ENCODE measurements at regions of chr17 and their contacts with region 1.

Region 1: DNA sequence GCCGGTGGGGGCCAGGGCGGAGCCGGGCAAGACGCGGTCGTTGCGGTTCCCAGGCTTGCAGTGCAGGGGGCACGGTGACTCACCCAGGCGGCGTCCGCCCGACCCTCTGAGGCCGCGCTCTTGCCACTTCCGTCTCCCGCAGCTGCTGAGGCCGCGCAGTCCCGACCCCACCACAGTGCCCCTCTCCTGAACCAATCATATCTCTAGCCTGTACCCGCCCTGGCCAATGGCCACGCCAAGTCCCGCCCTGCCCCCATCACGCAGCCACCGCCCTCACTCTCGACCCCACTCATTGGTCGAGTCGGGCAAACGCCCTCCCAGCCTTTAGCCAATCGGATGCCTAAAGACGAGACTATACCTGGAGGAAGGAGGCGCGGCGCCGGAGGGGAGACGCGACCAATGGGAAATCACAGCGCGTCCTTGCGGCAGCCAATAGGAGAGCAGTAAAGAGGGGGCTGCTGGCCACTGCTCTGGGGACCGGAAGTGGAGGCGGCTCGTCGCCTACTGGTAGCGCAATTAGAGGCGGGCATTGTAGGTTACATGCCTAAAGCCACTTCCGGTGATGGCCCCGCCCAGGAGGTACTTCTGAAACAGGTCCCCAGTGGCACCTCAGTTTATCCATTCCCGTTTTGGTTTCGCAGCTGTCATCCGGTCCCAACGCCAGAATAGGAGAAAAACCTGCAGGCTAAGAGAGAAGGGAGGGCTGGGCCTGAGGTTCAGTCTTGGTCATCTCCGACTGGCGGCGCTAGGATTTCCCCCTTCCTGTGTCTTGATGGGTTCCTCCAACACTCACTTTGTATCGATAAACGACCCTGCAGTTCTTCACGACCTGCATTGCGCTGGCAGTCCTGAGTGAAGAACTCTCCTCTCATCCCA is 3.5 kb upstream of the MTMR4 start:
- DNase-seq: peak; percentile 100
- ATAC-seq: peak; percentile 92

Region 2: DNA sequence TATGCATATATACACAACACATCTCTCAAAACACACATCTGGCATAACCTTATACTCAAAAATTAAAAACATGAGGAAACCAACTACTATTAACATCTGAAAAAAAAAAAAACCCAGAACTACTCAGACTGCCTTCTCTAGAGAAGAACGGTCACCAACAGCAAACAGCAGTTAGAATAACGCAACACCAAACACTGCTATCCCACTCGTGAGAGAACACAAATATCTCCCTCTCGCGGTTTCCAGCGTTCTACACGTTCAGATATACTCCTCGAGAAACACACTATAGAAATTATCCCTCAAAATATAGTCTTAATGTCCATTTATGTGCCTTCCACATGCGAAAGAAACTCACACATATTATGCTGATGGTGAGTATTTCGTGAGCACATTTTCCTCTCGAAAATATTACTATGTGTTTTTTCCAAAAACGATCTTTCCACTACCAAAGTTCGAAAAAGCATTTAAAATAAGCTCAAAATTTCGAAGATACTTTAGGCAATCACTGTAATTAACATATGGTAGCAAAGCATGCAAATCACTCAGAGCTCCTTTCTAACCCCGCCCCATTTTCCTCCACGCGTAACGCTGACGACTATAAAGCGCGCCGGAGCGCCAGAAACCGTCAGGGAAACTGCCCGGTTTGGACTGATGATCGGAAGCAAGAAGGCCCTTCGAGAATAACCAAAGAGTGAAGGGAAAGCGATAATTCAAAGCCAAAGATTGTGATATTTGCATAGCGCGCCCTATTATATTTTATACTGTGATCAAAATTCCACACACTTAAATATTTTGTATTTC is 113.8 kb after region 1 on chr17:
- intact Hi-C with region 1: loop called (anchors 1 kb)
- DNase-seq: peak; percentile 94
- ATAC-seq: peak; percentile 96

Region 3: GRCh38 chr17:58692239-58693055 is 174.5 kb after region 1 on chr17 and contains the start of gene RAD51C:
- intact Hi-C with region 1: loop called (anchors 1 kb)
- DNase-seq: peak; percentile 94
- ATAC-seq: peak; percentile 99
- total RNA-seq, gene RAD51C: 40.1 TPM

Region 4: DNA sequence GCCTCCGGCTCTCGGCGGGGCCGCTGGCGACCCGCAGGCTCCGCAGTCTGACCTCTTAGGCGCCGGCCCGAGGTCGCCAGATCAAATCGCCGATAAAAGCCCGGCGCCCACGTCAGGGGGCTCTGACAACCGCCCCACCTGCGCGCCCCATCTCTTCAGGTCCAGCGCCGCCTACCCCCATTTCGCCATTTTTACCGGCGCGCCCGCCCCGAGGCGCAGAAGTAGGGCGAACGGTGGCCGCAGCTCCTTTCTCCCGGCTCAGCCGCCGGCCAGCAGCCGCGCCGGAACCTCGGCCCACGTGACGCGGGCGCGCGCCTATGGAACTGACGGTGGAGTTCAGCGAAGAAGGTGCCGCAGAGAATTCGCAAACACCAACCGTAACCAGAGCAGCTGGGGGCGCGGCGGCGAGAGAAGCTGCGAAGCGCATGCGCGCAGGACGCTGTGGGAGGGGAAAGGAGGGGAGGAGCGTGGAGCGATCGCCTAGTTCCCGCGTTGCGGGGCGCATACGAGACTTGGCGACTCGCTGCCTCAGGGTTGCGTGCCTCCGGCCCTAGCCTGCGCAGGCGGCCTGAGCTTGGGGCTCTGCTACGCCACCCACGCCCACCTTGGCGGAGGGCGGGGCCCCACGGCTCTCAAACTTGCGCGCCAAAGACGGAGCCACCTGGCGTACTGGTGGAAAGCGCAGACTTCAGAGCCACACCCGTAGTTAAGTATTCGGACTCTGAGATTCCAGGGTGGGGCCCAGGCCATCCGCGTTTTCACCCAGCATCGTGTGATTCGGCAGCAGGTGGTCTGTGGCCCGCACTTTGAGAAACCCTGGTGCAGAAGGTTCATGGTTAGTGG is 588.7 kb after region 1 on chr17 and contains the start of gene TRIM37:
- intact Hi-C with region 1: loop called (anchors 10 kb)
- DNase-seq: peak; percentile 99
- ATAC-seq: peak; percentile 99
- total RNA-seq, gene TRIM37: 20.2 TPM